Caco-2 (cell line): ENCODE measurements at regions of chr4 and their contacts with region 1.

Region 1: DNA sequence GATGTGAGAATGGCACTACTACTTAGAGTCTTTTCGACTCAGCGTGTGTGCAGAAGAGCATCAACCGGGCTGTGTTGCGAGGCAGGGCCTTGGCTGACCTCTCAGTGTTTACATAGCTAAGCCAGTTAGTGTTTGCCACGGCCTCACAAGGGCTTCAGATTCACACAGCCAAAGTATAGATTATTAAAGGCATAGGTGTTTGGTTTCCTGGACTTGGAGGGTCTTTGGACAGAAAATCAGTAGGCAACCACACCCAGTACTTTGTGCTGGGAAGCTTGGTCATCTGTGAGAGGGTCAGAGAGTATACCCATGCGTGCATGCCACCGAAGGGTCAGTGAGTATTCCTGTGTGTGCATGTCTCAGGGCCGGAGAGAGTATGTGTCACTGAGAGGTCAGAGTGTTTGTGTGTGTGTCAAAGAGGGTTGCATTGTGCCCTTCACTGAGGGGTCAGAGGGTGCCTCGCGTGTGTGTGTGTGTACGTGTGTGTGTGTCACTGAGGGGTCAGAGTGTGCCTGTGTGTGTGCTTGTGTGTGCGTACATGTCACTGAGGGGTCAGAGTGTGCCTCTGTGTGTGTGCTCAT is 69.7 kb upstream of the MSANTD1 start:
- DNase-seq: peak in 1 of 2 experiments; percentile 11
- H3K4me3 ChIP-seq: no peak overlapping the region
- H3K4me3 Mint-ChIP-seq: no peak overlapping the region
- H3K27ac Mint-ChIP-seq: peak overlapping the region; percentile 46
- H3K4me1 ChIP-seq: peaks cover 8% of the 10 kb centered on the region
- H3K4me1 Mint-ChIP-seq: peaks cover 9% of the 10 kb centered on the region
- H3K27me3 ChIP-seq: no peaks in the 10 kb centered on the region
- H3K27me3 Mint-ChIP-seq: no peaks in the 10 kb centered on the region
- CTCF ChIP-seq: no peak

Region 2: GRCh38 chr4:2843263-2843940 is 335.8 kb before region 1 on chr4 and contains the start of gene ADD1:
- CTCF ChIA-PET with region 1: no interaction called
- POLR2A ChIA-PET with region 1: no interaction called
- intact Hi-C with region 1: no loop called
- DNase-seq: peak; percentile 90 to 98
- H3K4me3 ChIP-seq: peak within 1 kb of the TSS; percentile 90
- H3K4me3 Mint-ChIP-seq: peak within 1 kb of the TSS; percentile 90
- H3K27ac Mint-ChIP-seq: peak within 1 kb of the TSS; percentile 92
- H3K4me1 ChIP-seq: peaks cover 20% of the 10 kb centered on the region
- H3K4me1 Mint-ChIP-seq: peaks cover 27% of the 10 kb centered on the region
- H3K27me3 ChIP-seq: no peaks in the 10 kb centered on the region
- H3K27me3 Mint-ChIP-seq: no peaks in the 10 kb centered on the region
- CTCF ChIP-seq: no peak
- total RNA-seq, gene ADD1: 222 and 242 TPM in 2 replicates

Region 3: GRCh38 chr4:3207531-3208037 is 28.4 kb after region 1 on chr4:
- CTCF ChIA-PET with region 1: no interaction called
- POLR2A ChIA-PET with region 1: no interaction called
- intact Hi-C with region 1: loop called (anchors 1 kb)
- DNase-seq: peak in 1 of 2 experiments; percentile 49
- H3K4me3 ChIP-seq: no peak overlapping the region
- H3K4me3 Mint-ChIP-seq: no peak overlapping the region
- H3K27ac Mint-ChIP-seq: no peak overlapping the region
- H3K4me1 ChIP-seq: no peaks in the 10 kb centered on the region
- H3K4me1 Mint-ChIP-seq: peaks cover 13% of the 10 kb centered on the region
- H3K27me3 ChIP-seq: no peaks in the 10 kb centered on the region
- H3K27me3 Mint-ChIP-seq: no peaks in the 10 kb centered on the region
- CTCF ChIP-seq: no peak

Region 4: DNA sequence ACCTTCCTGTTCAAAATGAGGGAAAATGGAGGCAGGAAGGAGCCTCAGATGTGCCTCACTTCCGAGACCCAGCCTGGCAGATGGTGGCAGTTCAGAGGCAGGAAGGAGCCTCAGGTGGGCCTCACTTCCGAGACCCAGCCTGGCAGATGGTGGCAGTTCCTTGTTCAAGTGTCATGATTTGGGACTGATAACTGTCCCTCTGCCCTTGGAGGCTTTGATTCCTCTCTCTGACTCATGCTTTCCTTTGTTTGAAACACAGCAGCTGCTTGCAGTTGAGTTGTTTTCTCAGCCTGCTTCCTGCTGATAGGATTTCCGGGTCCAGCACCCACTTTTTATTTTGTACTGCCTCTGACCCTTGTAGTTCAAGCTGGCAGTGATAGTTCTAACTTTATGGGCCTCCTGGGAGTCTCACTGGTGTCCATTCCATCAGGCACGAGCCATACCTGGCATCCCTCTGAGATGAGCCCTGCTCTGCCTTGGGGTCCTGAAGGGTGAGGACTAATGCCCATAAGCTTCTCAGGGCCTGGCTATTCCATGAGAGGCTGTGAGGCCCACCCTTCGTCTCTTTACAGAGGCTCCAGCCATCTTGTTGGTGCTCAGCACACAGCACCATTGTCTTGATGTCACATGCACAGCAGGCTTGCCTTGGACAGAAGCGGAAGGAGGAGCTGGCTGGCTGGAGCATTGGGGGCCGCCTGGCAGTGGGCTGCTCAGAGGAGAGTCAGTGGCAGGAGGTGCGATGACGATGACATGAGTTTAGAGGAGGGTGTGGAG is 126.6 kb after region 1 on chr4:
- CTCF ChIA-PET with region 1: no interaction called
- POLR2A ChIA-PET with region 1: no interaction called
- intact Hi-C with region 1: no loop called
- DNase-seq: no peak
- H3K4me3 ChIP-seq: no peak overlapping the region
- H3K4me3 Mint-ChIP-seq: no peak overlapping the region
- H3K27ac Mint-ChIP-seq: no peak overlapping the region
- H3K4me1 ChIP-seq: no peaks in the 10 kb centered on the region
- H3K4me1 Mint-ChIP-seq: no peaks in the 10 kb centered on the region
- H3K27me3 ChIP-seq: no peaks in the 10 kb centered on the region
- H3K27me3 Mint-ChIP-seq: no peaks in the 10 kb centered on the region
- CTCF ChIP-seq: no peak